Naive thymus-derived CD8-positive, alpha-beta T cell (primary cell): ENCODE measurements at regions of chr17 and their contacts with region 1.

Region 1: DNA sequence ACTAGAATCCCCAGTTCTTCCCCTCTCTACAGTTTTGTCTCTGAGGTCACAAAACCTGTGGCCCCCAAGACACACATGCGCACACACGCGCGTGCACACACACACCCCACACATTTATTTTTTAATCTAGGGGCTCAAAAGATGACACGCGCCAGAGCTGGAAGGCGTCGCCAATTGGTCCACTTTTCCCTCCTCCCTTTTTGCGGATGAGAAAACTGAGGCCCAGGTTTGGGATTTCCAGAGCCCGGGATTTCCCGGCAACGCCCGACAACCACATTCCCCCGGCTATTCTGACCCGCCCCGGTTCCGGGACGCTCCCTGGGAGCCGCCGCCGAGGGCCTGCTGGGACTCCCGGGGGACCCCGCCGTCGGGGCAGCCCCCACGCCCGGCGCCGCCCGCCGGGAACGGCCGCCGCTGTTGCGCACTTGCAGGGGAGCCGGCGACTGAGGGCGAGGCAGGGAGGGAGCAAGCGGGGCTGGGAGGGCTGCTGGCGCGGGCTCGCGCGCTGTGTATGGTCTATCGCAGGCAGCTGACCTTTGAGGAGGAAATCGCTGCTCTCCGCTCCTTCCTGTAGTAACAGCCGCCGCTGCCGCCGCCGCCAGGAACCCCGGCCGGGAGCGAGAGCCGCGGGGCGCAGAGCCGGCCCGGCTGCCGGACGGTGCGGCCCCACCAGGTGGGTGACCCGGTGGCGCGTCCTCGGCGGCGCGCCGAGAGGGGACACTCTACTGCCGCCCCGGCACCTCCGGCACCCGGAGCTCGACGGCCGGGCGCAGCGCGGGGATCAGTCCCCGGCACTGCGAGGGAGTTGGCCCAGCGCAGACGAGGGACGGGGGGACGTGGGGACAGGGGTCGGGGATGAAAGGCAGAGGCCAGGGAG is at the start of gene STAT5A:
- DNase-seq: peak; percentile 67 to 89 (median 78)
- ATAC-seq: peak; percentile 78 to 85
- H3K4me3 Mint-ChIP-seq: peak within 1 kb of the TSS; percentile 88 to 97 (median 92)
- H3K27ac Mint-ChIP-seq: peak within 1 kb of the TSS; percentile 94 to 99 (median 96)
- H3K4me1 Mint-ChIP-seq: peaks cover 27 to 60% (median 54%) of the 10 kb centered on the region in 4 donors
- H3K27me3 Mint-ChIP-seq: no peaks in the 10 kb centered on the region
- polyA plus RNA-seq, gene STAT5A: 59.6 to 115 (median 89.1) TPM

Region 2: GRCh38 chr17:42221937-42222745 is 66.0 kb before region 1 on chr17:
- POLR2A ChIA-PET with region 1: interaction called, 21 read pairs
- DNase-seq: peak; percentile 31 to 74 (median 56)
- ATAC-seq: peak; percentile 94 to 95
- H3K4me3 Mint-ChIP-seq: no peak overlapping the region
- H3K27ac Mint-ChIP-seq: peak overlapping the region in 7 of 10 donors; percentile 14 to 86 (median 42)
- H3K4me1 Mint-ChIP-seq: peaks cover 2 to 9% (median 6%) of the 10 kb centered on the region in 4 donors
- H3K27me3 Mint-ChIP-seq: no peaks in the 10 kb centered on the region

Region 3: GRCh38 chr17:42248351-42249179 is 39.6 kb before region 1 on chr17:
- POLR2A ChIA-PET with region 1: interaction called, 119 read pairs
- DNase-seq: peak; percentile 50 to 92 (median 80)
- ATAC-seq: peak; percentile 85 to 91
- H3K4me3 Mint-ChIP-seq: peak overlapping the region; percentile 75 to 96 (median 90)
- H3K27ac Mint-ChIP-seq: peak overlapping the region; percentile 96 to 100 (median 98)
- H3K4me1 Mint-ChIP-seq: peaks cover 28 to 74% (median 64%) of the 10 kb centered on the region in 4 donors
- H3K27me3 Mint-ChIP-seq: no peaks in the 10 kb centered on the region

Region 4: GRCh38 chr17:42276359-42276608 is 11.9 kb before region 1 on chr17 and contains the start of gene STAT5B:
- POLR2A ChIA-PET with region 1: interaction called, 126 read pairs
- DNase-seq: peak in 9 of 10 donors; percentile 51 to 83 (median 69)
- ATAC-seq: peak; percentile 53 to 57
- H3K4me3 Mint-ChIP-seq: peak within 1 kb of the TSS; percentile 86 to 100 (median 96)
- H3K27ac Mint-ChIP-seq: peak within 1 kb of the TSS; percentile 94 to 98 (median 96)
- H3K4me1 Mint-ChIP-seq: peaks cover 31 to 59% (median 52%) of the 10 kb centered on the region in 4 donors
- H3K27me3 Mint-ChIP-seq: no peaks in the 10 kb centered on the region
- polyA plus RNA-seq, gene STAT5B: 66.3 to 94.0 (median 82.8) TPM

Region 5: GRCh38 chr17:42388381-42389134 is 100.4 kb after region 1 on chr17 and contains the start of gene STAT3:
- POLR2A ChIA-PET with region 1: interaction called, 18 read pairs
- DNase-seq: peak; percentile 100
- ATAC-seq: peak; percentile 80 to 88
- H3K4me3 Mint-ChIP-seq: peak within 1 kb of the TSS; percentile 91 to 99 (median 97)
- H3K27ac Mint-ChIP-seq: peak within 1 kb of the TSS; percentile 98 to 100 (median 100)
- H3K4me1 Mint-ChIP-seq: peaks cover 16 to 64% (median 46%) of the 10 kb centered on the region in 4 donors
- H3K27me3 Mint-ChIP-seq: no peaks in the 10 kb centered on the region
- polyA plus RNA-seq, gene STAT3: 129 to 154 (median 153) TPM

Region 6: DNA sequence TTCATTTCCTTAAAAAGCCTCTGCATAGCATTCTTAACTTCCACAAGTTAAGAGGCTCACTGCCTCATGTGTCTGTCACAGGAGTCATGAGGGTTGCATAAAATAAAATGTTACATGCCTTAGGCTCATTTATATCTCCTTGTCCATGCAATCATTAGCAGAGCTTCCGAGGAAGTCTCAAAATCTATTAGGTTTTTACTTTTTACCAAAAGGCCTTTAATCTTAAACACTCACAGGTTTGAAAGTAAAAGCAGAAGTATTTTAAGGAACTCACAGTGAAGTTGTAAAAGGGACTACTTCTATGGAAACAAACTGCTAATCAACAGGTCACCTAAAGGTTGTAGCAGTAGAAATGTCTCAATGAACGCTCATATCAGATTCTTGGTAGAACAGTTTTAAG is 165.3 kb after region 1 on chr17:
- POLR2A ChIA-PET with region 1: no interaction called
- DNase-seq: no peak
- ATAC-seq: no peak
- H3K4me3 Mint-ChIP-seq: peak overlapping the region in 1 of 10 donors; percentile 50
- H3K27ac Mint-ChIP-seq: peak overlapping the region in 2 of 10 donors; percentile 22 to 62
- H3K4me1 Mint-ChIP-seq: peaks cover 14 to 48% (median 23%) of the 10 kb centered on the region in 4 donors
- H3K27me3 Mint-ChIP-seq: no peaks in the 10 kb centered on the region